Heart left ventricle (tissue), 16 donors: ENCODE measurements at regions of chr11 and their contacts with region 1.

Region 1: DNA sequence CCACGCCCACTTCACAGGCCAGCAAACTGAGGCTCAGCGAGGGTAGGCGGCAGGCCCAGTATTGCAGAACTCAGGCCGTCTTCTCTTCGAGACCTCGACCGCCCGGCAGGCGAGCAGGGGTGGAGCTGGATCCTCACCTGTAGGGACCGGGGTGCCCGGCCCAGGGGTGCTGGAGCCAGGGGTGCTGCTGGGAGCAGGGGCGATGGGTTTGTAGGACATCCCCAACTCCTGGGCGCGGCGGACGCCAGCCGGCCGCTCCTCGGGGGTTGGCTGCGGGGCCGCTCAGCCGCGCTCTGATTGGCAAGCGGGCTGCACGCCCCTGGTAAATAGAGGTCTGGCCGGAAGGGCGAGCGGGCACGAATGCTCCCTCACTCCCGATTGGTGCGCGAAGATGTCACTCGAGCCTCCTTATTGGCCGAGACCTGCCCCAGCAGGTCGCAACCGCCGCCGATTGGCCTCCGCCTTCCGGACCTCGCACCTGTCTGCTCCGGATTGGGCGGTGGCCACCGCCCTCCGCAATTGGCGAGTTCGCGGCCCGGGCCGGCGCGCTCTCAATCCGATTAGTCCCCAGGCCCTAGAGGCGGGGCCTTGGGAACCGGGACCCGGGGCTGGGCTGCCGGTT is at the start of gene CDK2AP2:
- DNase-seq: peak; percentile 100
- ATAC-seq: peak; percentile 78 to 87 (median 84)
- H3K4me3 ChIP-seq: peak within 1 kb of the TSS; percentile 61 to 95 (median 77)
- H3K27ac ChIP-seq: peak within 1 kb of the TSS; percentile 96 to 100 (median 98)
- H3K4me1 ChIP-seq: peaks cover 10 to 53% (median 36%) of the 10 kb centered on the region in 12 donors
- H3K27me3 ChIP-seq: peaks cover 0 to 4% (median 0%) of the 10 kb centered on the region in 9 donors
- CTCF ChIP-seq: peak in 1 of 12 donors; percentile 4
- POLR2A ChIP-seq: peak; percentile 55 to 99
- total RNA-seq, gene CDK2AP2: 37.0 to 123 (median 59.3) TPM

Region 2: DNA sequence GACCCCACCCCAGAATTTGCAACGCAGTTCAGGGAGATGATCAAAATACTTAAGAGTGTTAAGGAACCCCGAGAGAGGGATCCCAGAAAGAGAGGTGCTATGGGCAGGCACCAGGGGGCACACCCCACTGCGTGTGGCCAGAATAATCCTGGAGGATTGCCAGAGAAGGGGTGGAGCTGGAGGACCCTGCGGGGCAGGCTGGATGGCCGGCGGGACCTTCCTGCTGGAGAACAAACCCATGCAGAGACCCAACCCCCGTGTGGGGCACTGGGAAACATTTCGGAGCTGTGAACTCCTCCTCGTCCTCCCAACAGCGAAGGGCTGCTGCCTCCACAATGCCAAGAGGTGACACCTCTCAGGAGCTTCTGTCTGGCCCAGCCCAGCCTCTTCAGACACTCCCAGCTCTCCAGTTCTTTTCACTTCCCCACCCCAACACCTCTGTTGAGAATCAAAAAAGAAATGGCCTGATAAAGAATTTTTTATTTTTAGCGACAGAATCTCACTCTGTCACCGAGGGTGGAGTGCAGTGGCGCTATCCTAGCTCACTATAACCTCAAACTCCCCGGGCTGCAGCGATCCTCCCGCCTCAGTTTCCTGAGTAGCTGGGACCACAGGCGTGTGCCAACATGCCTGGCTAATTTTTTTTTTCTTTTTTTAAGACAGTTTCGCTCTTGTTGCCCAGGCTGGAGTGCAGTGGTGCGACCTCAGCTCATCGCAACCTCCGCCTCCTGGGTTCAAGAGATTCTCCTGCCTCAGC is 425.8 kb before region 1 on chr11:
- intact Hi-C with region 1: no loop called
- DNase-seq: peak in 1 of 5 donors; percentile 68
- ATAC-seq: peak in 3 of 4 donors; percentile 10 to 59 (median 36)
- H3K4me3 ChIP-seq: peak overlapping the region in 10 of 12 donors; percentile 10 to 36 (median 24)
- H3K27ac ChIP-seq: no peak overlapping the region
- H3K4me1 ChIP-seq: peaks cover 0 to 12% (median 10%) of the 10 kb centered on the region in 12 donors
- H3K27me3 ChIP-seq: peaks cover 0 to 3% (median 0%) of the 10 kb centered on the region in 9 donors
- CTCF ChIP-seq: no peak
- POLR2A ChIP-seq: no peak

Region 3: DNA sequence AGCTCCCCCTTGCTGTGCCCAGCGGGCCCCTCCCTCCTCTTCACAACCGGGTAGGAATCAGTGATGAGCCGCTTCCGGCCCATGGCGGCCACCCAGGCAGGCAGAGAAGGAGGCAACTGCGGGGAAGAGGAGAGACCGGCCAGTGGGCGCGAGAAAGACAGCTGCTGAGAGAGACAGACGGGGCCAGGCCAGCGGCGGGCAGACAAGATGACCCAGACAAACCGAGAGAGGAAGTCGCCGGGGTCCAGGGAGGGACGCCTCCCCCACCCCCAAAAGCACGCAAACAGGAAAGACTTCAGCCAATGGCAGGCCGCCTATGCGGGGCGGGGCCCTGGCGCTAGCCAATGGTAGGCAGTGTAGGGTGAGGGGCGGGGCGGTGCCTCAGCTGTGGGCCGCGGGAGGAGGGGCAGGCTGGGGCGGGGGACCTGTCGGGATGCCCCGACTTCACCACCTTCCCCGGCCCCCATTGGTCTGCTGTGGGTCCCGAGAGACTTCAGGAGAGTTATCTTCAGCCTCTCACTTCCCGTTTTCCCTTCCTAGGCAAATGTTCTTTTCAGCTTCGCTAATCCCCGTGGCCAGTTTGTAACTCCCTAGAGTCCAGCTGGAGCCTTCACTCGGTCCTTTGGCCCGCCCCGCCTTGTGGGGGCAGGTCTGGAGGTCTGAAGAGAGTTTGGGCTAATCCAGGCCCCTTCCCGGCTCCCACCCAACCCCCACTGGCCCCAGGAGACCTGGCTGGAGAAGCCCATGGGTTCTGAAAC is 154.5 kb before region 1 on chr11 and contains the start of gene POLD4:
- intact Hi-C with region 1: loop called in 6 of 10 experiments (anchors 2 kb)
- DNase-seq: peak; percentile 99 to 100 (median 99)
- ATAC-seq: peak; percentile 89 to 96 (median 93)
- H3K4me3 ChIP-seq: peak within 1 kb of the TSS; percentile 49 to 97 (median 74)
- H3K27ac ChIP-seq: peak within 1 kb of the TSS; percentile 92 to 100 (median 99)
- H3K4me1 ChIP-seq: peaks cover 8 to 83% (median 63%) of the 10 kb centered on the region in 12 donors
- H3K27me3 ChIP-seq: no peaks in the 10 kb centered on the region
- CTCF ChIP-seq: peak in 1 of 12 donors; percentile 5
- POLR2A ChIP-seq: peak in 1 of 2 donors; percentile 84
- total RNA-seq, gene POLD4: 36.0 to 131 (median 57.1) TPM

Region 4: DNA sequence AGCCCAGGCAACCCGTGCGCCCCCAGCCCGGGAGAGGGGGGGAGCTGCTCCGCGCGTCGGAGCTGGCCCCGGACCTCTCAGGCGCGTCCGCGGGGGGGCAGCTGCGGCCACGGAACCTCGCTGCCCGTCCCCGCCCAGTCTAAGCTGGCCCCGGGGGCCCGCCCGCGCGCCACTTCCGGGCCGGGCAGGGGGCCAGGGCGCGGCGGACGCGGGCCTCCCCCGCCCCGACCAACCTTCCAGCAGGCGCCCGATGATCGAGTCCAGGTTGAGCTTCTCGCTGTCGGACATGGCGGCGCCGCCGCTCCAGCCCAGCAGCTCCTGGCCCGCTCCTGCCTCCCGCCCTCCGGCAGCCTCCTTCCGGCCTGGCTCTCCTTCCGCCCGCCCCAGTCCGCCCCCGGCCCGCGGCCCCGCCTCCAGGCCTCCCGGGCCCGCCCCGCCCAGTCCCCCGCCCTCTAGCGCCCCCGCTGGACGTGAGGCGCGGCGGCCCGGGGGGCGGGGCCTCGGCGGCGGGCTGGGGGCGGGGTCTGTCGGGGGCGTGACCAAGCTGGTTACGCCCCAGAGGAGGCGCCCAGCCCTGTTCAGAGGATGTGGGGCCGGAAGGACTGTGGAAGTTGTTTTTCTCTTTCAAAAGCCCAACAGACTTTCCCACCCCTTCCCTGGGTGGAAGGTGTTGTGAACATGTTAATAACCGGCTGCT is 106.3 kb before region 1 on chr11 and contains the start of gene PPP1CA:
- intact Hi-C with region 1: loop called in 3 of 10 experiments (anchors 1 to 5 kb)
- DNase-seq: peak; percentile 93 to 95 (median 93)
- ATAC-seq: peak; percentile 70 to 88 (median 86)
- H3K4me3 ChIP-seq: peak within 1 kb of the TSS; percentile 74 to 100 (median 86)
- H3K27ac ChIP-seq: peak within 1 kb of the TSS; percentile 91 to 99 (median 97)
- H3K4me1 ChIP-seq: peaks cover 0 to 62% (median 34%) of the 10 kb centered on the region in 12 donors
- H3K27me3 ChIP-seq: no peaks in the 10 kb centered on the region
- CTCF ChIP-seq: peak in 10 of 12 donors; percentile 20 to 88 (median 62)
- POLR2A ChIP-seq: peak; percentile 33 to 79
- total RNA-seq, gene PPP1CA: 90.3 to 151 (median 105) TPM

Region 5: GRCh38 chr11:67411785-67412152 is 96.2 kb before region 1 on chr11:
- intact Hi-C with region 1: no loop called
- DNase-seq: no peak
- ATAC-seq: no peak
- H3K4me3 ChIP-seq: no peak overlapping the region
- H3K27ac ChIP-seq: no peak overlapping the region
- H3K4me1 ChIP-seq: peaks cover 0 to 43% (median 12%) of the 10 kb centered on the region in 12 donors
- H3K27me3 ChIP-seq: peaks cover 0 to 56% (median 16%) of the 10 kb centered on the region in 9 donors
- CTCF ChIP-seq: no peak
- POLR2A ChIP-seq: no peak

Region 6: GRCh38 chr11:67428052-67428914 is 79.7 kb before region 1 on chr11 and contains the start of gene RPS6KB2:
- intact Hi-C with region 1: loop called in 3 of 10 experiments (anchors 5 kb)
- DNase-seq: peak; percentile 98 to 99 (median 99)
- ATAC-seq: peak; percentile 90 to 96 (median 94)
- H3K4me3 ChIP-seq: peak within 1 kb of the TSS; percentile 58 to 94 (median 80)
- H3K27ac ChIP-seq: peak within 1 kb of the TSS; percentile 76 to 96 (median 88)
- H3K4me1 ChIP-seq: peaks cover 7 to 23% (median 14%) of the 10 kb centered on the region in 12 donors
- H3K27me3 ChIP-seq: no peaks in the 10 kb centered on the region
- CTCF ChIP-seq: peak in 1 of 12 donors; percentile 15
- POLR2A ChIP-seq: peak; percentile 54 to 93
- total RNA-seq, gene RPS6KB2: 19.3 to 32.8 (median 25.2) TPM

Region 7: GRCh38 chr11:67482825-67483798 is 24.9 kb before region 1 on chr11 and contains the start of gene AIP:
- intact Hi-C with region 1: loop called in 1 of 10 experiments (anchors 2 kb)
- DNase-seq: peak; percentile 97 to 98 (median 98)
- ATAC-seq: peak; percentile 96 to 99 (median 99)
- H3K4me3 ChIP-seq: peak within 1 kb of the TSS; percentile 41 to 72 (median 60)
- H3K27ac ChIP-seq: peak within 1 kb of the TSS; percentile 21 to 91 (median 85)
- H3K4me1 ChIP-seq: peaks cover 5 to 44% (median 25%) of the 10 kb centered on the region in 12 donors
- H3K27me3 ChIP-seq: peaks cover 0 to 3% (median 0%) of the 10 kb centered on the region in 9 donors
- CTCF ChIP-seq: peak in 3 of 12 donors; percentile 11 to 37 (median 34)
- POLR2A ChIP-seq: peak in 1 of 2 donors; percentile 64
- total RNA-seq, gene AIP: 41.7 to 69.2 (median 53.0) TPM